ENCODE measurements at regions of chr11 and their contacts with region 1.

Region 1: DNA sequence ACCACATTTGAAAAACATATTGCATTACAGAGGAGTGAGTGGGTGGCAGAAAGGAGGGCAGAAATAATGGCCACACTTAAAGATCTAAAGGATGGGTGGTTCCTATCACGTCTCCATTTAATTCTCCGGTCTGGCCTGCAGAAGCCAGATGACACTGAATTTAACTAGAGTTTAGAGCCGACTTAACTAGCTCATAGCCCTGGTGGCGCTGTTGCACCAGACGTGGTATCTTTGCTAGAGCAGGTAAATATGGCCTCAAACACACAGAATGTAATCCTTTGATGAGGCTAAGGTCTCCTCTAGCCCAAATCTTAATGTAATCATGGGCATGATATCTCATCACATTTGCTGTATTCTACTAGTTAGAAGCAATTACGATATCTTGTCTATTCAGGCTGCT is 51.5 kb upstream of the GAL start:
- DNase-seq: peak; percentile 67
- ATAC-seq: peak; percentile 91
- H3K4me3 ChIP-seq: no peak overlapping the region
- H3K27ac ChIP-seq: no peak overlapping the region
- H3K4me1 ChIP-seq: no peaks in the 10 kb centered on the region
- H3K27me3 ChIP-seq: peaks cover under 1 to 2% of the 10 kb centered on the region in 2 experiments; a peak in 2 of 5 replicates
- CTCF ChIP-seq: peak; percentile 82
- EP300 ChIP-seq: no peak
- POLR2A ChIP-seq: no peak
- RAD21 ChIP-seq: peak; percentile 63

Region 2: DNA sequence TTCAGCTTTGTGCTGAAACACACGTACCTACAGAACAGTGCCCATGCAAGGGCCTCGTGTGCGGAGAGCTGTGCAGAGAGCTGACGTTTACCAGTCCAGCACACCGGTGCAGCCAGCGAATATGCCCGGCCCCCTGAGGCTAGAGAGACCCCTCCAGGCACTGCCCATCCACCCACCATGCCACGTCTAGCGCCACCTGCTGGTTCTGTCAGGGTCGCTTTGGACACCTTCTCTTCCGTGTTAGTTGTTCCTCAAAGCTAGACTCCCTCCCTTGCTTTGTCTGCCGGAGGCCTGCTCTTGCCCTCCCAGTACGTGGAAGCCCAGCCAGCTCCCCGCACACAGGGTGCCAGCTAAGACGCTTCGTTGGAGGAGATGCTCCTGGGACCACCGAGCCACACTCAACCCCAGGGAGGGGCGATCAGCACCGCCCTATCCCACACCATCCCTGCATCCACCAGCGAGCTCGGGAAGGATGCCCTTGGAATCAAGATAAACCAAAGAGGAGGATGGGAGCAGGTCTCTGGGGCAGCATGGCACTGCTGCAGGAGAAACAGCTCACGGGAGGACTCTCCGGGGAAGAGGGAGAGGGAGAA is 165.5 kb after region 1 on chr11:
- CTCF ChIA-PET with region 1: interaction called, 14 read pairs
- POLR2A ChIA-PET with region 1: no interaction called
- in situ Hi-C with region 1: no loop called
- intact Hi-C with region 1: no loop called
- DNase-seq: peak; percentile 12
- ATAC-seq: peak; percentile 77
- H3K4me3 ChIP-seq: no peak overlapping the region
- H3K27ac ChIP-seq: no peak overlapping the region
- H3K4me1 ChIP-seq: no peaks in the 10 kb centered on the region
- H3K27me3 ChIP-seq: no peaks in the 10 kb centered on the region
- CTCF ChIP-seq: peak; percentile 77
- EP300 ChIP-seq: no peak
- POLR2A ChIP-seq: no peak
- RAD21 ChIP-seq: no peak

Region 3: DNA sequence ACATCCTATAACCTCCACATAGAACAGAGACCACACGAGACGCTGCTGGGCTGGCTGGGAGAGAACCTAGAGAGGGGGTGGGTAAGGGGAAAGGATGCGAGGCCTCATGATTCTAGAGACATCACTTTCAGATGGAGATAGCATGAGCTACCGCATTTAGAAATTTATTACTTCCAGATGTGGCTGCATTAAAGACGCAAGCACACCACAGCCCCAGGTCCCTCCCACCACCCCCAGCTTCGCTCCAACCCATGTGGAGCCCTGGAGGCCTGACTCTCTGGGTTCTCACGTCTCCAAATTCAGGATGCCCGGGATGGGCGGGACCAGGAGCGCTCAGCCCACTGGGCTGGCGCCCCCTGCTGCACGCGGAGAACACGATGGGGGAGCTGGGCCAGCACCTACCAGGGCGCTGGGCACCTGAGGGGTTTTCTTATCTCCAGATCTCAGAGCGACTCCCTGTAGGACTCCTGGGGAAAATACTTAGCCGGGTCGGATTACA is 257.2 kb after region 1 on chr11:
- CTCF ChIA-PET with region 1: no interaction called
- POLR2A ChIA-PET with region 1: no interaction called
- in situ Hi-C with region 1: loop called (anchors 25 kb)
- intact Hi-C with region 1: no loop called
- DNase-seq: no peak
- ATAC-seq: peak; percentile 66
- H3K4me3 ChIP-seq: no peak overlapping the region
- H3K27ac ChIP-seq: no peak overlapping the region
- H3K4me1 ChIP-seq: no peaks in the 10 kb centered on the region
- H3K27me3 ChIP-seq: no peaks in the 10 kb centered on the region
- CTCF ChIP-seq: peak; percentile 55
- EP300 ChIP-seq: no peak
- POLR2A ChIP-seq: no peak
- RAD21 ChIP-seq: no peak

Region 4: DNA sequence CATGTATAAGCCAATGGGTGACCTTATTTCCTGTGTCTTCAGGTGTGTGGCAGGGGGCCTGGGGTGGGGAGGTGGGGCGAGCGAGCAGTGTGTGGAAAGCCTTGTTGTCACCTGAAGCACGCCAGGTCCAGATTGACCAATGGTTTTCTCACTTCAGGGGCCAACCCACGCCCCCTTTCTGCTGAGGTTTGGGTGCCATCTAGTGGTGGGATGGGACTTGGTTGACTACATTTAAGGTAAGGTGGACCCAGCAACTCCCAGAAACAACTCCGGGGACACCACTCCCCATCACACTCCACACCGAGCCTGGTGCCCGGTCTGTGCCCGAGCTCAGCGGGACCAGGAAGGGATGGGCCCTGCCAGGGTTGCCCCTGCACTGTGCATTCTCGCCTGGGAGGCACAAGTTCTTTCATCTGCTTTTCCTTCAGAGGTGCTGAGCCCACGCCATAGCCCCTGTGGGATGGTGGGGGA is 455.9 kb after region 1 on chr11:
- CTCF ChIA-PET with region 1: interaction called, 7 read pairs
- POLR2A ChIA-PET with region 1: no interaction called
- in situ Hi-C with region 1: no loop called
- intact Hi-C with region 1: loop called (anchors 2 kb)
- DNase-seq: peak; percentile 75
- ATAC-seq: peak; percentile 85
- H3K4me3 ChIP-seq: no peak overlapping the region
- H3K27ac ChIP-seq: no peak overlapping the region
- H3K4me1 ChIP-seq: no peaks in the 10 kb centered on the region
- H3K27me3 ChIP-seq: no peaks in the 10 kb centered on the region
- CTCF ChIP-seq: peak; percentile 90
- EP300 ChIP-seq: no peak
- POLR2A ChIP-seq: no peak
- RAD21 ChIP-seq: peak; percentile 78